CD8-positive, alpha-beta T cell (primary cell): ENCODE measurements at regions of chr2 and their contacts with region 1.

Region 1: GRCh38 chr2:985317-985898 is 34.8 kb downstream of the SNTG2 start:
- DNase-seq: peak in 3 of 9 experiments; percentile 28 to 69 (median 50)
- ATAC-seq: peak; percentile 89
- H3K4me3 ChIP-seq: peak overlapping the region in 1 of 2 experiments; percentile 15
- H3K4me3 Mint-ChIP-seq: peak overlapping the region; percentile 64
- H3K27ac ChIP-seq: peak overlapping the region in 1 of 2 experiments; percentile 16
- H3K27ac Mint-ChIP-seq: peak overlapping the region; percentile 88
- H3K4me1 ChIP-seq: peaks cover 12% of the 10 kb centered on the region
- H3K4me1 Mint-ChIP-seq: peaks cover 33% of the 10 kb centered on the region
- H3K27me3 ChIP-seq: no peaks in the 10 kb centered on the region
- H3K27me3 Mint-ChIP-seq: peaks cover 3% of the 10 kb centered on the region
- CTCF ChIP-seq: no peak

Region 2: GRCh38 chr2:974502-974901 is 10.9 kb before region 1 on chr2:
- CTCF ChIA-PET with region 1: interaction called, 8 read pairs
- POLR2A ChIA-PET with region 1: interaction called, 20 read pairs
- intact Hi-C with region 1: loop called in 1 of 2 experiments (anchors 1 kb)
- DNase-seq: peak in 2 of 9 experiments; percentile 21 to 57
- ATAC-seq: peak; percentile 34
- H3K4me3 ChIP-seq: peak overlapping the region; percentile 27 to 47
- H3K4me3 Mint-ChIP-seq: peak overlapping the region; percentile 78
- H3K27ac ChIP-seq: peak overlapping the region; percentile 51 to 53
- H3K27ac Mint-ChIP-seq: peak overlapping the region; percentile 87
- H3K4me1 ChIP-seq: peaks cover 39% of the 10 kb centered on the region
- H3K4me1 Mint-ChIP-seq: peaks cover 74% of the 10 kb centered on the region
- H3K27me3 ChIP-seq: no peaks in the 10 kb centered on the region
- H3K27me3 Mint-ChIP-seq: no peaks in the 10 kb centered on the region
- CTCF ChIP-seq: no peak